Activated CD4-positive, alpha-beta T cell treated with anti-CD3 and anti-CD28 coated beads for 36 hours (primary cell): ENCODE measurements at regions of chr3 and their contacts with region 1.

Region 1: GRCh38 chr3:30502742-30503073 is 103.7 kb upstream of the TGFBR2 start:
- DNase-seq: no peak
- ATAC-seq: peak; percentile 66
- H3K4me3 Mint-ChIP-seq: no peak overlapping the region
- H3K27ac Mint-ChIP-seq: peak overlapping the region; percentile 68
- H3K4me1 Mint-ChIP-seq: peaks cover 37% of the 10 kb centered on the region
- H3K27me3 Mint-ChIP-seq: no peaks in the 10 kb centered on the region

Region 2: DNA sequence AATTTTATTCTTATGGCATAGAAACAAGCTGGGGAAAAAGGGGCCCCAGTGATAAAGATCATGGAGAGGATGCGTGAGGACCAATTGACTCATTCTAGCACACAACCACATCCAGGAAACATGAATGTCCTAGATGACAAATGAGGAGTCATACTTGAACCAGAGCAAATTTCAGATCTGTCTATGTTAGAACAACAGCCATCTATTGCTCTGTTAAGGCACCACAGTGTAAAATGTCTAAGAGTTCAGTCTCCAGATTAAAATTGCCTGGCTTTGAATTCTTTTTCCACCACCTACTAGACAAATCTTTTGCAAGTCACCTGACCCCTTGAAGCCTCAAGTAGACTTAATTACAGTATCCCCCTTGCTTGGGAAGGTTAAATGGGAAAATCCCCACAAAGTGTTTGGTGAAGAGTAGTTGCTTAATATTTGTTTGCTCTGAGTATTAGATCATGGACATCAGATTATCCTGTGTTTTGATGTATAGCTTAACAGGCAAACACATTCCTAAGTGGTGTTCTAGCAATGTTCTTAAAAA is 155.0 kb before region 1 on chr3:
- CTCF ChIA-PET with region 1: no interaction called
- POLR2A ChIA-PET with region 1: no interaction called
- intact Hi-C with region 1: loop called in 1 of 2 experiments (anchors 2 kb)
- DNase-seq: peak; percentile 67
- ATAC-seq: peak; percentile 97
- H3K4me3 Mint-ChIP-seq: no peak overlapping the region
- H3K27ac Mint-ChIP-seq: peak overlapping the region; percentile 82
- H3K4me1 Mint-ChIP-seq: peaks cover 85% of the 10 kb centered on the region
- H3K27me3 Mint-ChIP-seq: peaks cover 8% of the 10 kb centered on the region

Region 3: GRCh38 chr3:30475038-30475808 is 27.5 kb before region 1 on chr3:
- CTCF ChIA-PET with region 1: interaction called, 3 read pairs
- POLR2A ChIA-PET with region 1: no interaction called
- intact Hi-C with region 1: loop called in 1 of 2 experiments (anchors 2 kb)
- DNase-seq: peak; percentile 60
- ATAC-seq: peak; percentile 83
- H3K4me3 Mint-ChIP-seq: no peak overlapping the region
- H3K27ac Mint-ChIP-seq: peak overlapping the region; percentile 22
- H3K4me1 Mint-ChIP-seq: peaks cover 52% of the 10 kb centered on the region
- H3K27me3 Mint-ChIP-seq: no peaks in the 10 kb centered on the region

Region 4: DNA sequence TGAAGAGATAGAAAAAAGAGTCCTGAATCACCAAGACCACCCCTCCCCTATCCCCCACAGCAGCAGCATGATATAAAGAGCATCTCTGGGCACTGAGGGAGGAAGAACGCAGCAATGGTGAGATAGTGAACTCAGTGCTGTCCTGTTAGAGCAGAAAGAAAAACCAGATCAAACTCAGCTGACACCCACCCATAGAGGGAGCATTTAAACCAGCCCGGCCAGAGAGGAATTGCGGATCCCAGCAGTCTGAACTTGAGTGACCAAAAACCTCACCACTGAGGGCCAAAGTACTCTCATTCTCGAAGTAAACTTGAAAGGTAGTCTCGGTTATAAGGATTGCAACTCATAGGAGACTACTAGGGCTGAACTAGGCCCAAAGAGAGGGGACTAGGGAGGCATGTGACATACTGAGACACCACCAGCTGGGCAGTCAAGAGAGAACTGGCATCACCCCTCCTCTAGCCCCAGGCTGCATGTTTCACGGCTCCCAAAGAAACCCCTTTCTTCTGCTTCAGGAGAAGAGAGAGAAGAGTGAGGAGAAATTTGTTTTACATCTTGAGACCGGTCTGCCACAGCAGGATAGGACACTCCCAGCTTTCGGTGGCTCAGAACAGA is 64.5 kb after region 1 on chr3:
- CTCF ChIA-PET with region 1: no interaction called
- POLR2A ChIA-PET with region 1: no interaction called
- intact Hi-C with region 1: no loop called
- DNase-seq: no peak
- ATAC-seq: no peak
- H3K4me3 Mint-ChIP-seq: no peak overlapping the region
- H3K27ac Mint-ChIP-seq: no peak overlapping the region
- H3K4me1 Mint-ChIP-seq: no peaks in the 10 kb centered on the region
- H3K27me3 Mint-ChIP-seq: no peaks in the 10 kb centered on the region

Region 5: GRCh38 chr3:30623351-30623750 is 120.6 kb after region 1 on chr3:
- CTCF ChIA-PET with region 1: no interaction called
- POLR2A ChIA-PET with region 1: no interaction called
- intact Hi-C with region 1: loop called (anchors 5 kb)
- DNase-seq: no peak
- ATAC-seq: peak; percentile 20
- H3K4me3 Mint-ChIP-seq: peak overlapping the region; percentile 17
- H3K27ac Mint-ChIP-seq: peak overlapping the region; percentile 83
- H3K4me1 Mint-ChIP-seq: peaks cover 96% of the 10 kb centered on the region
- H3K27me3 Mint-ChIP-seq: no peaks in the 10 kb centered on the region

Region 6: DNA sequence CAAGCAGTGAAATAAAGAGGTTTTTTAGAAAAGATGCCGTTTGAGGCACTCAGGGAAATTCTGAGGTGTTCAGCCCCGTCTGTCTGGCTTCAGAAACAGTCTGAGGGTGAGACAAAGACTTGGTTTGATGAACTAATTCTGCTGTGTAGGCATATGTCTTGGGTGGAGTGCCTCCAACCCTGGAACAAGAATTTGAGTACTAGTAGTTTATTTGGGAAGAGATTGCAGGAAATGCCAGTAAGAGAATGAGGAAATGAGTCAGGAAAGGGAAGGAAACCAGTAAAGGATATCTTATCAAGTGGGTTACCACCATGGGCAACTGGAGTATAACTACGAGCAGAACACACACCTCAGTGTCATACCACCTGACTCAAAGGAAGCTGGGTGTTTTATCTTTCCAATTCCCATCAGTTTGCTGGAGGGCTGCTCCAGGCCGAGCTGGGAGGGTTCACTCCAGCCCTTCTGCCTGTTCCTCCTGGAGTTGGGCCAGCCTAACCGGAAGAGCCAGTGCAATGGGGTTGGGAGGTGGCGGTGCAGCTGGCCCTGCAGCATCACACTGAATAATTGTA is 179.0 kb after region 1 on chr3:
- CTCF ChIA-PET with region 1: no interaction called
- POLR2A ChIA-PET with region 1: no interaction called
- intact Hi-C with region 1: loop called in 1 of 2 experiments (anchors 5 kb)
- DNase-seq: peak; percentile 40
- ATAC-seq: peak; percentile 21
- H3K4me3 Mint-ChIP-seq: peak overlapping the region; percentile 6
- H3K27ac Mint-ChIP-seq: peak overlapping the region; percentile 83
- H3K4me1 Mint-ChIP-seq: peaks cover 95% of the 10 kb centered on the region
- H3K27me3 Mint-ChIP-seq: no peaks in the 10 kb centered on the region